ENCODE measurements at regions of chr1 and their contacts with region 1.

Region 1: DNA sequence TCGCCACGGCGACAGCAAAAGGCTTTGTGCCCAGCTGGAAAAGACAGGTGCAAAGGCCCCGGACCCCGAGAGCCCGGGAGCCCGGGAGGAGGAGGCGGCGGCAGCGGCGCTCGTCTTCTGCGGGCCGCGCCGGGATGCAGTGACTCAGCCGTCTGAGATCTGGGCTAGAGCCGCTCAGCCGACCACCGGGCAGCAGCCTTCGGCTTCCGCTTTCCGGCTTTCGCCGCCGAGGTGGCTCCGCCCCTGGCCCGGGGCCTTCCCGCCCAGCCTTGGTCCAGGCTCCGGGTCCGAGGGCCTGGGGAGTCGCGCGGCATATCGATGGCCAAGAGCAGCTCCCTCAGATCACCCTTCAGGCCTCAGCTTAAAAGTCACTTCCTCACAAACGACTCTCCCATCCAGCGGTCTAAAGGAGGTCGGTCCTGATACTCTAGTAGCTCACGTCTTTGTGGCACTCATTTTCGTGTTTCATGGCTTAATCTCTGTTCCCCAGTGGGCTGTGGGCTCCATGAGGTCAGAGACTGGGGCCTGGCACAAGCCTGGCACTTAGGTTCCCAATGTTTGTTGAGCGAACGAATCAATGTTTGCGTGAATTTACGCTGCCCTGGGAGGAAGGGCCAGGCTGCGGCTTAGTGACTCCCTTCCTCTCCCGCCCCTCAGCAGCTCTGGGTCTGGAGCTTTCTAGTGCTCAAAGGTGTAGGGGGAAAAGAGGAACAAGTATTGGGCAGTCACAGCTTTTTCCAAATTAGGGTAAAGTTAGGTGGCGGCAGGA is at the start of gene PHTF1:
- DNase-seq: peak; percentile 85 to 91 (median 89)
- ATAC-seq: peak; percentile 95 to 97
- H3K4me3 ChIP-seq: peak within 1 kb of the TSS; percentile 99
- H3K27ac ChIP-seq: peak within 1 kb of the TSS; percentile 93
- H3K4me1 ChIP-seq: no peaks in the 10 kb centered on the region
- H3K27me3 ChIP-seq: no peaks in the 10 kb centered on the region
- total RNA-seq, gene PHTF1: 7.3 to 9.3 (median 9.0) TPM

Region 2: DNA sequence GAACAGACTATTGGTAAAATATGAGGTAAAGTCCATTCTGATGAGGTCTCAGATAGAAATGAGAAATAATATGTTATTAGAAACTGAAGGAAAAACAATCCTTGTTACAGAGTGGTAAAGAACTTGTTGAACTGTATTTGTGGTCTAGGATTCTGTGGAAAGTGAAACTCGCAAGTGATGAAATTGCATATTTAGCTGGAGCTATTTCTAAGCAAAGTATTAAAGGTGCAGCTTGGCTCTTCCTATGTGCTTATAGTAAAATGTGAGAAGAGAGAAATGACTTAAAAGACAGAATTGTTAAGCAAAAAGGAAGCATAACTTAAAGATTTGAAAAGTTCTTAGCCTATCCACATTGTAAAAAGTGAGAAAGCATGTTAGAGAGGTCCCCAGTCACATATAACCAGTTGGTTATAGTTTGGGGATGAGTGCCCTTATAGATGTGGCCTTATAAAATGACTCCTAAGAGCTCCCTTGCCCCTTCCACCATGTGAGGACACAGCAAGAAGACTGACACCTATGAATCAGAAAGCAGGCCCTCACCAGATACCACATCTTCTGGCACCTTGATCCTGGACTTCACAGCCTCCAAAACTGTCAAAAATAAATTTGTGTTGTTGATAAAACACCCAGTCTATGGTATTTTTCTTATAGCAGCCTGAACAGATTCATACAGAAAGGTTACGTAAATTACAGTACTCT is 25.0 kb before region 1 on chr1:
- intact Hi-C with region 1: no loop called
- DNase-seq: no peak
- ATAC-seq: no peak
- H3K4me3 ChIP-seq: no peak overlapping the region
- H3K27ac ChIP-seq: no peak overlapping the region
- H3K4me1 ChIP-seq: no peaks in the 10 kb centered on the region
- H3K27me3 ChIP-seq: no peaks in the 10 kb centered on the region

Region 3: DNA sequence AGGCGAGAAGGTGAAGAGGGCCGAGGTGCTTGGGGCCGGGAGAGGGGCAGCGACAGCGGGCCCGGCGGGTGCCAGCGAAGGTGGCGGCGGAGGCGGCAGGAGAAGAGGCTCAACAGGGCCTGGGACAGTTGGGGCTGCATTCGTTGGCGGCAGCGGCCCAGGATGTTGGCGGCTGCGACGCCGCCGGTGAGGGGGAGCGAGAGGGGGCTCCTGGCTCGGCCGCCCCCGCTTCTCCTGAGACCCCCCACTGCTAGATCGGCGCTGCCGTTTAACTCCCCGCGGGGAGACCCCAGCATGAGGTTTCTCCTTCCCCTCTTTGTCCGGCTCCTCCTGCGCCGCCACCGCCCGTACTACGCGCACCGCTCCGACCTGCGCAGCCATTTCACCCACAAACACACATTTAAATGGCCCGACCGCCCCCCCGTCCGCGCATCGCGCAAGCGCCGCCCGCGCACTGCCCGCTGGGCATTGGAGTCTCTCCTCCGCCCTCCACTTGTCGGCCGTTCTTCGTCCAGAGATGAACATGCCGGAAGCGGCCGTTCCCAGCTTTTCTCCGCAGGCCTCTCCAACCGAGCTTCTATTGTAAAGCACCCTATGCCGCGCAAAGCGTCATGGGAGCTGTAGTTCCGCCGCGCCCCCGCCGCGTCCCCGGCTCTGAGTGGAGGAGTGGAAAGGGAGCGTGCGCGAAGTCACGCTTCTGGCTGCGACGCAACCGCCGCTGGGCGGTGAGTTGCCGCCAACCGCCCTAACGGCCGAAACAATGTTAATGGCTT is 52.6 kb after region 1 on chr1 and contains the start of gene RSBN1:
- intact Hi-C with region 1: loop called in 1 of 4 experiments (anchors 5 kb)
- DNase-seq: peak; percentile 99 to 100 (median 100)
- ATAC-seq: peak; percentile 98 to 99
- H3K4me3 ChIP-seq: peak within 1 kb of the TSS; percentile 91
- H3K27ac ChIP-seq: peak within 1 kb of the TSS; percentile 97
- H3K4me1 ChIP-seq: no peaks in the 10 kb centered on the region
- H3K27me3 ChIP-seq: no peaks in the 10 kb centered on the region
- total RNA-seq, gene RSBN1: 12.8 to 15.2 (median 13.8) TPM

Region 4: GRCh38 chr1:113975211-113975895 is 215.8 kb after region 1 on chr1:
- intact Hi-C with region 1: no loop called
- DNase-seq: no peak
- ATAC-seq: no peak
- H3K4me3 ChIP-seq: no peak overlapping the region
- H3K27ac ChIP-seq: no peak overlapping the region
- H3K4me1 ChIP-seq: peaks cover 4% of the 10 kb centered on the region
- H3K27me3 ChIP-seq: no peaks in the 10 kb centered on the region

Measured in right cardiac atrium (tissue), 5 donors.